WTC11 (cell line): ENCODE measurements at regions of chr6 and their contacts with region 1.

Region 1: DNA sequence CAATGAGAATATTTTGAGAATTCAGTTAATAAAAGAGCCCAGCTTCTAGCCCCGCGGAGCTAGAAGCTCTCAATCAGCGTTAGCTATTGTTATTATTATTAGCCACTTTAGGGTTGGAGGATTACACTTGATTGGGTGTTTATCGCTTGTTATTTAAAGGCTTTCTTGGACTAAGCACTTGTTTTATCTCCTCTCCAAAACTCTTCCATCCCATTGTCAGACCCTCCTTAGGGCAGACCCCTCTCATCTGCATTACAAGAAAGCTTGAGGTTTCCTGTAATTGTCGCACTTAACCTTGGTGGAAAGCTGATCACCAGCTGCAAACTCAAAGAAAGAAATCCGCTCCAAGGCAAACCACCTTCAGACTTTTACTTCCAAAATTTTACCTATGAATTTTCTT is 4.8 kb downstream of the DPPA5 start:
- DNase-seq: no peak
- ATAC-seq: peak; percentile 82
- H3K4me3 Mint-ChIP-seq: peak overlapping the region; percentile 32
- H3K27ac Mint-ChIP-seq: peak overlapping the region; percentile 93
- H3K4me1 Mint-ChIP-seq: peaks cover 54% of the 10 kb centered on the region
- H3K27me3 Mint-ChIP-seq: peaks cover 9% of the 10 kb centered on the region
- CTCF ChIP-seq: no peak

Region 2: GRCh38 chr6:73367761-73368355 is 18.5 kb after region 1 on chr6:
- CTCF ChIA-PET with region 1: interaction called, 4 read pairs
- POLR2A ChIA-PET with region 1: interaction called, 10 read pairs
- DNase-seq: no peak
- ATAC-seq: peak; percentile 33
- H3K4me3 Mint-ChIP-seq: no peak overlapping the region
- H3K27ac Mint-ChIP-seq: no peak overlapping the region
- H3K4me1 Mint-ChIP-seq: peaks cover 12% of the 10 kb centered on the region
- H3K27me3 Mint-ChIP-seq: peaks cover 9% of the 10 kb centered on the region
- CTCF ChIP-seq: no peak